WTC11 (cell line): ENCODE measurements at regions of chr12 and their contacts with region 1.

Region 1: GRCh38 chr12:3202734-3203446 is 125.7 kb downstream of the TSPAN9 start:
- DNase-seq: peak; percentile 83
- ATAC-seq: peak; percentile 6; the same call in 1 of the 2 replicates
- H3K4me3 Mint-ChIP-seq: no peak overlapping the region
- H3K27ac Mint-ChIP-seq: no peak overlapping the region
- H3K4me1 Mint-ChIP-seq: peaks cover 40% of the 10 kb centered on the region
- H3K27me3 Mint-ChIP-seq: peaks cover 36% of the 10 kb centered on the region
- CTCF ChIP-seq: peak; percentile 92

Region 2: DNA sequence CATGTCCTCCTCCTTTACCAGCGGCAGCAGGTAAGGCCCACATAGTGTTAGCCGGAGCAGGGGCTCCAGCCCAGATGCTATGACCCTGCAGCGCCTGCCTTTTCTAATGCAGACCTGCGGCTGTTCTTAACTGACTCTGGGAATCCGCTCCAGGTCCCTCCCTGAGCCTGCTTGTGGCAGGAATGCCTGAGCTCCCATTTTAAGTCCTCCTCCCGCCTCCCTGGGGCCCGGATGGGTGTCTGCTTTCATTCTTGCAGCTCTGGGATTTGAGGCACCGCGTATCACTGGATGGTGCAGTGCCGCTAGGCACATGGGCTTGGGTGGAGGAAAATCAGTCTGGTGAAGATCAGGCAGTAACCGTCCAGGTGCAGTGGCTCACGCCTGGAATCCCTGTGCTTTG is 118.1 kb before region 1 on chr12:
- CTCF ChIA-PET with region 1: no interaction called
- POLR2A ChIA-PET with region 1: no interaction called
- DNase-seq: peak; percentile 73
- ATAC-seq: peak; percentile 89
- H3K4me3 Mint-ChIP-seq: no peak overlapping the region; the same call in 1 of the 2 replicates
- H3K27ac Mint-ChIP-seq: peak overlapping the region; percentile 82
- H3K4me1 Mint-ChIP-seq: peaks cover 38% of the 10 kb centered on the region
- H3K27me3 Mint-ChIP-seq: no peaks in the 10 kb centered on the region
- CTCF ChIP-seq: no peak

Region 3: DNA sequence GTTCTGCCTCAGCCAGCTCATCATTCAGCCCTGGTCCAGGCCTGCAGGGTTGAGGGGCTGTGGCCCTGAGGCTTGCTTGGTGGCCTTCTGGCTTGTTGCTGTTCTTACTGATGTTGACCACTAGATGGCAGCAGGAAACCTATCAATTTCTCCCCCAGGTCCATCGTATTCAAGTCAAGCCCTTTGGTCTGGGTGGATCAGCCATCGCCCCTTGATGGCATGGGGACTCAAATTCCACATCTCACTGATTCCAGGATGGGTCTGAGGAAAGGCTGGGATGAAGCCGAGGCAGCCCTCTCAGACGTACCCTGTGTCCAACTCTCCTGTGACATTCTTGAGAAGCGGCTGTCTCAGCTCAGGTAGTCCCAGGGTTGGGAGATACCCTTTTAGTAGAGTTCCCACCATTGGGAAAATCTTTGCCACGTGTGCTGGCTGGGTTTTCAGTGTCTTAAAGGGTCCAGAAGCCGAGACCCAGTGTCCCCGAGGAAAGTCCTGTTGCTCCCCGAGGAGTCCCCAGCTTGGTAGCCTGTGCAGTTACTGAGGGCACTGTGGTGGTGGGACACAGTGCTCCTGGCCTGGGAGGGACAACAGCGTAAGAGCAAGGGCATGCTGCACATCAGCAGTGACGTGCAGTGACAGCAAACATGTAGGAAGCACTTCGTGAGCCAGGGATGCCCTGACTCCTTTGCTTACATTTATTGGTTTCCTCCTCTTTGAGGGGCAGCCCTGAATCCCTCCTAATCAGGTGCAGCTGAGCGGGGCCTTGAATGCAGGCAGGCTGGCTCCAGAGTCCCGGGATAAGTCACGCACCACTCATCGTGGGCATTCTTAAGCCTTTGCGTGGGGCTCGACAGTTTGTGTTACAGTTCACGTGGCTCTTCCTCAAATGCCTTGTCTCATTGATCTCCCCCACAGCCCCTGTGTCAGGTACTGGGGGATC is 67.1 kb before region 1 on chr12:
- CTCF ChIA-PET with region 1: interaction called, 236 read pairs
- POLR2A ChIA-PET with region 1: interaction called, 3 read pairs
- DNase-seq: peak; percentile 64
- ATAC-seq: peak; percentile 72
- H3K4me3 Mint-ChIP-seq: no peak overlapping the region
- H3K27ac Mint-ChIP-seq: no peak overlapping the region
- H3K4me1 Mint-ChIP-seq: peaks cover 61% of the 10 kb centered on the region
- H3K27me3 Mint-ChIP-seq: no peaks in the 10 kb centered on the region
- CTCF ChIP-seq: peak; percentile 82

Region 4: DNA sequence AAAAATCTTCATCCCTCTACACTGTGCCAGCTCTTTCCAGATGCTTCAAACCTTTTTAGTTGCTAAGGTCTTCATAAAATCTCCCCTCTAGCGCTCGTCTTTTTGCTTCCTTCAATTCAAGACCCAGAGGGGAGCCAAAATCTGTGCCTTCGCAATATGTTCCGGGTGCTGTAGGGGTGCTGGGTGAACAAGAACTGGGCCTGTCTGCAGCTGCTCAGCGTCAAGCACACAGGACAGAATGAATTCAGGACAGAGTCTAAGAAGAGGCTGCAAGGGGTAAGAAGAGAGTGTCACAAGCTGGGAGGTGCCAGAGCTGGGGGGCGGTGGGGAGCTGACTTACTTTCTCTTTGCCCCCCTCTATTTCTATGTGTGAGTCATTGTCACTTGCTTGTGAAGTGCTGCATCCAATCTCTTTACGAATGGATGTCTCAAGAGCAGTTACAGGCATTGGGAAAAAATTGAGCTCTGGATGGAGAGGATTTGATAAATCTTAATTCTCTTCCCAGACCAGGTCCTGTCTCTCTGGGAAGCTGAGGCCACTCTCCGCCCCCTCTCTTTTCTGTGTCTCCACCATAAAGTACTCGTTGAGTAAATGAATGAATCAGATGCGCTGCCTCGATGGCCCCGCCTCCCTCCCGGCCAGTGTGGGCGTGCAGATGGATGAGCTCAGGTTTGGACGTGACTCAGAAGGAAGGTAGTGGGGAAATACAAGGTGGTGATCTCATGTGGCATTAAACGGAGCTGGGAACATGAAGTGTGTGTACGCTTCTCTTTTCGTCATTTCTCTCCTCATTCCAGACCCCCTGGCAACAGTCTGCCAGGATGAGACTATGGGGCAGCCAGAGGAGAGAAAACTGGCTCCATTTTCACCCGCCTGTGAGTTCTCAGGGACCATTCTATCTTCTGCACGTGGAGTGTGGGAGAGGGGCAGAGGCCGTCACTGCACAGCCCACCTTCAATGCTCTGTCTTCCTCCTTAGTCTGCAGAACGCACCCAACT is 34.4 kb before region 1 on chr12:
- CTCF ChIA-PET with region 1: interaction called, 15 read pairs
- POLR2A ChIA-PET with region 1: no interaction called
- DNase-seq: no peak
- ATAC-seq: no peak; the same call in 1 of the 2 replicates
- H3K4me3 Mint-ChIP-seq: no peak overlapping the region
- H3K27ac Mint-ChIP-seq: no peak overlapping the region
- H3K4me1 Mint-ChIP-seq: peaks cover 68% of the 10 kb centered on the region
- H3K27me3 Mint-ChIP-seq: no peaks in the 10 kb centered on the region
- CTCF ChIP-seq: no peak

Region 5: DNA sequence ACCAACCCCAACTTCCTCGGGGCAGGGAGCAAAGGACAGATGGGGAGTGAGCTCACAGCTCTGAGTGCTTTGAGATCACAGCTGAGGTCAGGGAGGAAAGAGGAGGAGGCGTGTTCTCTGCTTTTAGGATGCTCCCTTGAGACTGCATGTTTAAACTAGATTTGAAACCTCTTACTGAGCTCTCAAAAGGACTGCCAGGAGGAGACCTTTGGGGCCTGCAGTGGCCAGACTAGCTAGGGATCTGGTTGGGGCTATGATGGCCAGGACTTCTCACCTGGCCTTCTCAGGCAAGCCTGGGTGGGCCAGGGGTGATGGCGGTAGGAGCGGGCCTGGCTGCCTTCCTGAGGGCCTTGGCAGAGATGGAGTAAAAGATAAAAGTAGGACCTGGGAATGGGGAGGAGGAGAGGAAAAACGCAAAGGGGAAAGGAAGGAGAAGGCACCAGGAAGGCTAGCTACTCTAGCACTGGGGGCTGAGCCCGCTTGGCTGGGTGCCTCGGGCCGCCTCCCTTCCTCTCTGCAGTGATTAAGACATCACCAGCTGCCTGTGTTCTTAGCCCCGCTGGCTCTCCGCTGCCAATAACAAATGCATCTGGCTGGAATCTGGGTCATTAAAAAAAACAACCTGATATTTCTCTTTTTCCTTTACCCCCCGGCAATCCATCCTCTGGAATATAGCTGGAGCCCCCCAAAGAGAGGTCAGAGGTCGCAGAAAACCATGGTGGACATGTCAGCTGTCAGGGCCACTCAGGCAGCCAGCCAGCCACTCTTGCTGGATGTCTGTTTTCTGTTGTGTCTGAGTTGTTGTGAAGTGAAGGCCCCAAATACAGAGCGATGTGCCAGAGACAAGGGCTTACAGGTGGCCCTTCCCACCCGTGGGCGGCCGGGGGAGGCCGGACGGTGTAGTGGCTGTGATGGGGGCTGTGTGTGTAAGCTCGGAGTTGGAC is 15.6 kb after region 1 on chr12:
- CTCF ChIA-PET with region 1: interaction called, 13 read pairs
- POLR2A ChIA-PET with region 1: no interaction called
- DNase-seq: no peak
- ATAC-seq: no peak
- H3K4me3 Mint-ChIP-seq: no peak overlapping the region
- H3K27ac Mint-ChIP-seq: peak overlapping the region; percentile 51
- H3K4me1 Mint-ChIP-seq: peaks cover 20% of the 10 kb centered on the region
- H3K27me3 Mint-ChIP-seq: no peaks in the 10 kb centered on the region
- CTCF ChIP-seq: no peak

Region 6: DNA sequence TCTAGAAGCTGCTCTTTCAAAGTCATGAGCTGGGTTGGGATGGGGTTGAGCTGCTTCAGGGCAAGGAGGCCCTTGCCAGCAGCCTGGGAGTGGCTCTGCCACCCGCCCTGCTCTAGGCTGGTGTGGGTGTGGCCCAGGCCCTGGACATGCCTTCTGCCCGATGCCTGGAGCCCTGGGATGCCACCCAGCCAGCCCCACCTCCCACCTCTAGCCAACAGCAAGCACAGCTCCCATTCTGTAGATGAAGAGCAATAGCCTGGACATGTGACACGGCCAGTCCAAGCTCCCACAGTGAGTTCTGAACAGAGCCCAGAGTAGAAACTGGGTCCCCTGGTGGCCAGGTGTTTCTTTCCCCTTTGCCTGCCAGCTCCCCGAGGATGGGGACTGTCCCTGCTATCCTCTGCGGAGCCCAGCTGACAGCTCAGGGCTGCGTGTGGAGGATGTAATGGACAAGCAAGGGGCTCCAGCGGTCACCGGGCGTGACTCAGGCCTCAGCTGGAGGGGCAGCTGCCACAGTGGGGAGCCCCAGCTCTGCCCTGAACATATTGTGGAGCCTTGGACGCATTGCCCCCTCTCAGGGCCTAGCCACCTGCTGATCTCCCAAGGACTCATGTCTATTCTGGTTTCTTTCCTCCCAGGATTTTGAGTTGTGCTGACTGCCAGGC is 39.4 kb after region 1 on chr12:
- CTCF ChIA-PET with region 1: interaction called, 27 read pairs
- POLR2A ChIA-PET with region 1: no interaction called
- DNase-seq: no peak
- ATAC-seq: peak; percentile 58
- H3K4me3 Mint-ChIP-seq: no peak overlapping the region
- H3K27ac Mint-ChIP-seq: no peak overlapping the region
- H3K4me1 Mint-ChIP-seq: peaks cover 3% of the 10 kb centered on the region
- H3K27me3 Mint-ChIP-seq: no peaks in the 10 kb centered on the region
- CTCF ChIP-seq: no peak